Colonic mucosa (tissue), 4 donors: ENCODE measurements at regions of chr12 and their contacts with region 1.

Region 1: DNA sequence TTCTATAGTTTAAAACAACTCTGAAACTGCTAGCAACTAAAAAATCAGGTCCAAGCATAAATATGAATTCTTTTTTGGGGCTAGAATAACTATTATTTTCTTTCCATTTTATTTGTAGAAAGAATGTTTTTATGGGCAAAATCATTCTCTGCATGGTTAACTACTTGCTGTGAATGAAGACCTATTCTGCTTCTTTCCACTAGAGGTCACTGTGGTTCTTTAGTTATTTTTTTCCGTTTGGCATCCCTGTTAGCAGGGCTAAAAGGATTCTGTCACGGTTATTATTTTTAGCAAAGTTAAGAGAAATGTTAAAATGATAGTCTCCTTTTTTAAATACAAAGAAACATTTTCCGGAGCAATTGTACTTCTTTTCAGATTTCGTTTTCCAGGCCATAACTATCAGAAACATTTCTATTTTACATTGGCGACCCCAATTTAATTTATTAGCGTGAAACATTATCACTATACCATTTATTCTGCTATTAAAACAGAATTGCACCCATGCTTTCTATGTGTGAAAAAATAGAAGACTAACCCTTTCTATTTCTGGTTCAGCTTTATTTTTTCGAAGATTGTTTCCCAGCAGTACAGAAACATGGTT is 404.8 kb downstream of the ATP23 start:
- DNase-seq: no peak
- H3K4me3 ChIP-seq: no peak overlapping the region
- H3K27ac ChIP-seq: no peak overlapping the region
- H3K4me1 ChIP-seq: no peaks in the 10 kb centered on the region
- H3K27me3 ChIP-seq: no peaks in the 10 kb centered on the region
- CTCF ChIP-seq: peak; percentile 80

Region 2: GRCh38 chr12:57983146-57983857 is 362.8 kb before region 1 on chr12:
- intact Hi-C with region 1: no loop called
- DNase-seq: peak; percentile 26
- H3K4me3 ChIP-seq: no peak overlapping the region
- H3K27ac ChIP-seq: no peak overlapping the region
- H3K4me1 ChIP-seq: no peaks in the 10 kb centered on the region
- H3K27me3 ChIP-seq: no peaks in the 10 kb centered on the region
- CTCF ChIP-seq: peak; percentile 57

Region 3: GRCh38 chr12:58323676-58324075 is 22.5 kb before region 1 on chr12:
- intact Hi-C with region 1: loop called (anchors 2 kb)
- DNase-seq: no peak
- H3K4me3 ChIP-seq: no peak overlapping the region
- H3K27ac ChIP-seq: no peak overlapping the region
- H3K4me1 ChIP-seq: no peaks in the 10 kb centered on the region
- H3K27me3 ChIP-seq: no peaks in the 10 kb centered on the region
- CTCF ChIP-seq: no peak

Region 4: DNA sequence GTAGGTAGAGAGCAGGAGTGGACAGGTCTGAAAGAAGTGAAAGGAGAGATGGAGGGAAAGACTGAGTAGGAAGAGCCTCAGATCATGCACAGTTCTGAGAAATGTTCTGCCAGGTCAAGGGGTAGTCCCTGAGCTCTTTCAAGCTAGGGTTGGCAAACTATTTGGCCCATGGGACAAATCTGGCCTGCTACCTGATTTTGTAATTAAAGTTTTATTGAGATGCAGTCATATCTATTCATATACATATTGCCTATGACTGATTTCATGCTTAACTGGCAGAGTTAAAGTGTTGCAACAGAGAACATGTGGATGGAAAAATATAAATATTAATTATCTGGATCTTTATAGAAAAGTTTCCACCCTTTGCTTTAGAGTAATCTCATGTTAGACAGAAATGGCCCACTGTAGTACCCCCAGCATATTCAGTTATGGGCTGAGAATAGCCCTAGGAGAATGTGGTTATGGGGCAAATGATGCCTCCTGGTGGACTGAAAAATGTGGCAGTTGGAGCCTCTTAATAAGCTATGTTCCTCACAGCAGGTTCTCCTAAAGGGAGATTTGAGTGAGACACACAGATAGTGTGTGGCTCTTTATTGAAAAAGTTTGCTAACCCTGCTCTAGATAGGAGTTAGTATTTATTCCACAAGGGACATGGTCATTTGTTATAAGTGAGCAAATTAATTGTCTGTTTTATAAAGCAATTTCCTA is 97.3 kb after region 1 on chr12:
- intact Hi-C with region 1: loop called (anchors 5 kb)
- DNase-seq: peak; percentile 25
- H3K4me3 ChIP-seq: no peak overlapping the region
- H3K27ac ChIP-seq: no peak overlapping the region
- H3K4me1 ChIP-seq: no peaks in the 10 kb centered on the region
- H3K27me3 ChIP-seq: no peaks in the 10 kb centered on the region
- CTCF ChIP-seq: peak; percentile 48

Region 5: GRCh38 chr12:58540480-58541299 is 194.6 kb after region 1 on chr12:
- intact Hi-C with region 1: loop called (anchors 10 kb)
- DNase-seq: peak; percentile 68
- H3K4me3 ChIP-seq: no peak overlapping the region
- H3K27ac ChIP-seq: no peak overlapping the region
- H3K4me1 ChIP-seq: no peaks in the 10 kb centered on the region
- H3K27me3 ChIP-seq: no peaks in the 10 kb centered on the region
- CTCF ChIP-seq: peak; percentile 60

Region 6: DNA sequence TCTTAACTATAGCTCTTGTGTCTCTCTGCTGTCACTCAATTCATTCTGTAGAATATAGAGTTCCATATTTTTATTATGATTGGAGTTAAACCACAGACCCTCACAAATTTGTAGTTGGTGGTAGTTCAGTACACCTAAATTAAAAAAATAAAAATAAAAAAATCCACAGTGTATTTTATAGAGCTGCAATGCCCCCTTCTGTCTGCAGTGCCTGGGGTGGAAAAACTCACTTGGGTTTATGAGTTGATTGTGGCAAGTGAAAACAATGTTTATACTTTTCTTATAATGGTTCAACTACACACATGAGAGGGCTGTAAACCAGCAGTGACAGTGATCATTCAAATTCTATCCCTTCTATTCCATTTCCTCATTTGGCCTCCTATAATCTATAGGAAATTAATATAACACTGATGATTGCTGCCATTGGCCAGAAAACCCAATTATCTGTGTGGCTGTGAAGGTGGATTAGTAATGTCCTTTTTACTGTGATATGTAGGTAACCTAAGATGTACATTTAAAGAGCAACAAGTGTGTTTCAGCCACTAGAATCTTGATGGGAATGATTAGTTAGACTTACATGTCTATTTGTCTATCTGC is 741.0 kb after region 1 on chr12:
- intact Hi-C with region 1: loop called (anchors 10 kb)
- DNase-seq: peak; percentile 38
- H3K4me3 ChIP-seq: no peak overlapping the region
- H3K27ac ChIP-seq: no peak overlapping the region
- H3K4me1 ChIP-seq: no peaks in the 10 kb centered on the region
- H3K27me3 ChIP-seq: no peaks in the 10 kb centered on the region
- CTCF ChIP-seq: peak; percentile 39

Region 7: DNA sequence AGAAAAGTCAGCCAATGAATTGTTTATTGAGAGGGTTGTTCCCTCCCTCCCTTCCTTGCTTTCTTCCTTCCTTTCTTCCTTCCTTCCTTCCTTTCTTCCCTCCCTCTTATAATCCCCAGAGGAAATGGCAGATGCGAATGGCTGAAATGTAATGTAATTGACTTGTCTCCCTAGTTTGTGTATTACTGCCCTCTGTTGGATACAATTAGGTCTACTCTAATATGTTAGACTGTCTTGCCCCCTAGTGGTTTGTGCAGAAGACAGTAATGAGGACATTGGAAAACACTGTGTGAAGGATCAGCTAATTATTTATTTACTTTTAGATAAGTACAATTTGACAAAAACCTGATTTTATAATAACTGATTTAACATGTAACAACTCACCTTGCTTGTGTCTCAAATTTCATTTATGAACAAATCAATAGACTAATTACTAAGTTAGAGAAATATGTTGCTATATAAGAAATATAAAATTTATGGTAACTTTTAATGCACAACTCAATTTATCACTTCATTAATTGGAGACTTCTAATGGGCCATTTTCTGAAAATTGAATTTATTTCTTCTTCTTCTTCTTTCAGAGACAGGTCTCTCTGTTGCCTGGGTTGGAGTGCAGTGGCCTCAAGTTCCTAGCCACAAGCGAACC is 804.0 kb after region 1 on chr12:
- intact Hi-C with region 1: loop called (anchors 5 kb)
- DNase-seq: peak; percentile 30
- H3K4me3 ChIP-seq: no peak overlapping the region
- H3K27ac ChIP-seq: no peak overlapping the region
- H3K4me1 ChIP-seq: no peaks in the 10 kb centered on the region
- H3K27me3 ChIP-seq: no peaks in the 10 kb centered on the region
- CTCF ChIP-seq: peak; percentile 80